ENCODE measurements at regions of chr2 and their contacts with region 1.

Region 1: DNA sequence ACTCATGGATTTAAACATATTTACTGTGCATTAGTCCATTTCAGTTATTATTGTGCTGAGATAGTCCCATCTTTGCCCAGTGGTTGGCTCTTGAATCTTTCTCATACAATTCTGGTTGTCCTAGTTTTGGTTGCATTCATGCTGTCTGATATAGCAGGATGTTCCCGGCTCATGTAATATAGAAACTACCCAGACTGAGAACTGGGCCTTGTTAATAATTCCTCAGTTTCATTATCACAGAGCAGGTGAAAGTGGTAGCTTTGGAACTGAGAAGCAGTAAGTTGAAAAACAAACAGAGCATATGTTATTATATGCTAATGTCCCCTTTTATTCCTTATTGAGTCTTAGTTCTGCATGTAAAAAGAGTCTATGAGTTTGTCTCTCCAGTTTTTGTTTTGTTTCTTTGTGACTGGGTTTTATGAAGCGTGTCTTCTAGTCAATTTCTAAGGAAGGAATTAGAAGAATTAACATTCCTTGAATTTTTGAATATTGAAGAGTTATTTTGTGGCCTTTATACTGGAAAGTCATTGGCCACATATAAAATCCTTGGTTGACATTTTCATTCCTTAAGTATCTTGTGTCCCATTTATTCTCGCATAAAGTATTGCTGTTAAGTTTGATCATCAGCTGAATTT is 43.3 kb downstream of the EIF5B start:
- DNase-seq: no peak
- H3K4me3 ChIP-seq: no peak overlapping the region
- H3K27ac ChIP-seq: no peak overlapping the region
- H3K4me1 ChIP-seq: no peaks in the 10 kb centered on the region
- H3K27me3 ChIP-seq: no peaks in the 10 kb centered on the region
- CTCF ChIP-seq: no peak

Region 2: DNA sequence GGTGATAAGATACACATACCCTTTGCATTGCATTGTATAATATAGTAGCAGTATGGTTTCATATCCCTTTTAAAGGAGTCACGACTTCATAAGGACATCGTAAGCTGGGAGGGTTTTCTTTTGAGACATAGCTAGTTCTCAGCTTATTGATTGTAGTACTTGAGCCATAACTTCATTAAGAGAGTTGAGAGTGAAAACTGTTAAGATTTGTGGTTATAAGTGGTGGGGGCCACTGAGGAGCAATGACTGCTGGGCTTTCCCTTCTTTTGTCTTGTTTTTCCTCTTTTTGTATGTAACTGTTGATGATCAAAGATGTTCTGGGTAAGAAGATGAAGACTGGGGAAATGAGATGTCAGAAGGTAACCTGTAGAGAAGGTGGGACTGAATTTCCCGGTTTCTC is 32.3 kb before region 1 on chr2:
- CTCF ChIA-PET with region 1: no interaction called
- dilution Hi-C with region 1: loop called (anchors 5 kb)
- in situ Hi-C with region 1: no loop called
- intact Hi-C with region 1: no loop called
- DNase-seq: no peak
- H3K4me3 ChIP-seq: no peak overlapping the region
- H3K27ac ChIP-seq: no peak overlapping the region
- H3K4me1 ChIP-seq: no peaks in the 10 kb centered on the region
- H3K27me3 ChIP-seq: no peaks in the 10 kb centered on the region
- CTCF ChIP-seq: no peak

Measured in mammary epithelial cell (primary cell).